Left lung (tissue), 14 donors: ENCODE measurements at regions of chr11 and their contacts with region 1.

Region 1: GRCh38 chr11:12893787-12894672 is 115.1 kb upstream of the RASSF10 start:
- DNase-seq: peak in 2 of 4 donors; percentile 33 to 51
- ATAC-seq: peak; percentile 76
- H3K4me3 ChIP-seq: no peak overlapping the region
- H3K27ac ChIP-seq: no peak overlapping the region
- H3K4me1 ChIP-seq: peaks cover 2 to 3% of the 10 kb centered on the region in 2 donors
- H3K27me3 ChIP-seq: no peaks in the 10 kb centered on the region
- CTCF ChIP-seq: peak; percentile 80 to 87

Region 2: DNA sequence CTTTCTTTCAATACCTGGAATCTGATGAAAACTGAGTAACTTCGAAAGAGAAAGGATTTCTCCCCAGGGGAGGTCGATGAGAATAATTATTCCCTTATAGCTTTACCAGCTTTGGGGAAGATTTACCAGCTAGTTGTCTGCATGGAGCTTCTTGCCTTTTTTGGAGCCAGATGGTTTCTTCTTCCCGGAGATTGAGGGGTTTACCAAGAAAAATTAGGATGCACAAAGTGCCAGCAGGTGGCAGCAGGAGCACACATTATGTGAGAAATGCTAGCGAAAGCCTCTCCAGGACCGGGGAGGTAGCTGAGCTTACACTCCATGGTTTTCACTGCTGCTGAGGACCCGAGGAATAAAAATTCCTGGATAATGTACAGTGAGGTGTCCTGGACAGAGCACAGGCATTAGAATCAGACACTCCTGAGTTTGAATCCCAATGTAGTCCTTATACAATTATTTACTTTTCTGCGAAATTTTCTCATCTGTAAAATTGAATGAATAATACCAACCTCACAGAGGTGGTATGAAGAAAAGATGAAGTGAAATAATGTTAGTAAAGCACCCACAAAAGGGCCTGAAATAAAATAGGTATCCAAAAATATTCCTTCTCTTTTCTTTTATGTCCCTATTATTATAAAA is 562.7 kb before region 1 on chr11:
- intact Hi-C with region 1: loop called in 1 of 2 experiments (anchors 2 kb)
- DNase-seq: peak in 3 of 4 donors; percentile 76 to 90 (median 81)
- ATAC-seq: peak; percentile 96
- H3K4me3 ChIP-seq: no peak overlapping the region
- H3K27ac ChIP-seq: no peak overlapping the region
- H3K4me1 ChIP-seq: peaks cover 0 to 4% of the 10 kb centered on the region in 2 donors
- H3K27me3 ChIP-seq: no peaks in the 10 kb centered on the region
- CTCF ChIP-seq: peak; percentile 54 to 63

Region 3: GRCh38 chr11:12411806-12412727 is 482.0 kb before region 1 on chr11:
- intact Hi-C with region 1: loop called in 1 of 2 experiments (anchors 10 kb)
- DNase-seq: peak in 2 of 4 donors; percentile 56 to 74
- ATAC-seq: peak; percentile 82
- H3K4me3 ChIP-seq: no peak overlapping the region
- H3K27ac ChIP-seq: peak overlapping the region in 1 of 2 donors; percentile 9
- H3K4me1 ChIP-seq: peaks cover 24 to 30% of the 10 kb centered on the region in 2 donors
- H3K27me3 ChIP-seq: no peaks in the 10 kb centered on the region
- CTCF ChIP-seq: peak; percentile 40 to 51